ENCODE measurements at regions of chr1 and their contacts with region 1.

Region 1: DNA sequence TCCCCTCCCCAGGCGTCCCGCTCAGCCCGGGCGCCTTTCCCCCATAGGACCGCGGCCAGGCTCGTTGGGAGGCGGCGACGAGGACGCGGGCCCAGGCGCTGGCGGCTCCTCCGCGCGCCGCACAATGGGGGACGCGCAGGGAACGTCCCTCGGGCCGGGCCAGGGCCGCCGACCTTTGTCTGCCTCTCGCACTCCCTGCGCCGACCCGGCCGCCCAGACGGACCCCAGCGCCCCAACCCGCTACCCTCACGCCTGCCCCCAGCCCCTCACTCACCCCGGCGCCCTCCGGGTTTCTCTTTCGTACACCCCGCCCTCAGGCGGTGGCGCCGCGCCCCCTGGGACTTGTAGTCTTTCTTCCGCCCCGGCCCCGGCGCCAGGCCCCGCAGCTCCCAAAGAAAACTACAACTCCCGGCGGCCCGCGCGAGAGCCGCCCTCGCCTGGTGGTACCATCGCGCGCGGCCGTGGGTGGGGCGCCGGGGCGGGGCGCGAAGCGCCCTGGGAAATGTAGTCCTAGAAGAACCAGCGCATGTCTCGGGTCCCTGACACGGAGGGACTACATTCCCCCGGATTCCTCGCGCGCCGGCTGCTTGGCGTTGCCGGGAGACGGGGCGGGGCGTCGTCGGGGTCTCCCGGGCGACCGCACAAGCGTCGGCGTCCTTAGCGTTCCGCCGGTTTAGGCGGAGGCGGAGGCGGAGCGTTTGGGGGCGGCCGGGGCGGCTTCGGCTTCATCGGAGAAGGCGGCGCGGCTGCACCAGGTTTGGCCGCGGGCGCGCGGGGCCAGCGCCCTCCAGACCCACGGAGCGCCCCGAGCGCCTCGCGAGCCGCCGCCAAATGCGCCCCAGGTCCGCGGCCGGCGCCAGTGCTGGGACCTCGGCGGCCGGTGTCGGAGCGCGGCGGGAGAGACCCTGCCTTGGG is at the start of gene C1orf159:
- DNase-seq: peak; percentile 99
- H3K4me3 ChIP-seq: peak within 1 kb of the TSS; percentile 53 to 74 (median 62)
- H3K27ac ChIP-seq: peak within 1 kb of the TSS in 1 of 3 donors; percentile 37
- H3K4me1 ChIP-seq: peaks cover 0 to 5% of the 10 kb centered on the region in 2 donors
- H3K27me3 ChIP-seq: no peaks in the 10 kb centered on the region
- CTCF ChIP-seq: no peak
- POLR2A ChIP-seq: peak in 1 of 2 donors; percentile 42
- total RNA-seq, gene C1orf159: 10.3 to 27.6 (median 19.6) TPM

Region 2: GRCh38 chr1:999725-1000356 is 116.2 kb before region 1 on chr1 and contains the start of gene HES4:
- intact Hi-C with region 1: no loop called
- DNase-seq: peak; percentile 86 to 88
- H3K4me3 ChIP-seq: peak within 1 kb of the TSS; percentile 38 to 73 (median 54)
- H3K27ac ChIP-seq: peak within 1 kb of the TSS; percentile 94 to 97 (median 95)
- H3K4me1 ChIP-seq: peaks cover 20 to 37% of the 10 kb centered on the region in 2 donors
- H3K27me3 ChIP-seq: no peaks in the 10 kb centered on the region
- CTCF ChIP-seq: no peak
- POLR2A ChIP-seq: peak; percentile 45 to 84
- total RNA-seq, gene HES4: 5.0 to 29.2 (median 18.6) TPM

Region 3: GRCh38 chr1:1374929-1375662 is 259.1 kb after region 1 on chr1 and contains the start of gene AURKAIP1:
- intact Hi-C with region 1: loop called (anchors 10 kb)
- DNase-seq: peak; percentile 98 to 99
- H3K4me3 ChIP-seq: peak within 1 kb of the TSS; percentile 90 to 98 (median 98)
- H3K27ac ChIP-seq: peak within 1 kb of the TSS; percentile 81 to 98 (median 82)
- H3K4me1 ChIP-seq: peaks cover 23 to 25% of the 10 kb centered on the region in 2 donors
- H3K27me3 ChIP-seq: no peaks in the 10 kb centered on the region
- CTCF ChIP-seq: peak in 4 of 6 experiments; percentile 23 to 49 (median 30)
- POLR2A ChIP-seq: peak in 1 of 2 donors; percentile 60
- total RNA-seq, gene AURKAIP1: 73.8 to 198 (median 105) TPM

Measured in thyroid gland (tissue), 4 donors.